ENCODE measurements at regions of chr5 and their contacts with region 1.

Region 1: DNA sequence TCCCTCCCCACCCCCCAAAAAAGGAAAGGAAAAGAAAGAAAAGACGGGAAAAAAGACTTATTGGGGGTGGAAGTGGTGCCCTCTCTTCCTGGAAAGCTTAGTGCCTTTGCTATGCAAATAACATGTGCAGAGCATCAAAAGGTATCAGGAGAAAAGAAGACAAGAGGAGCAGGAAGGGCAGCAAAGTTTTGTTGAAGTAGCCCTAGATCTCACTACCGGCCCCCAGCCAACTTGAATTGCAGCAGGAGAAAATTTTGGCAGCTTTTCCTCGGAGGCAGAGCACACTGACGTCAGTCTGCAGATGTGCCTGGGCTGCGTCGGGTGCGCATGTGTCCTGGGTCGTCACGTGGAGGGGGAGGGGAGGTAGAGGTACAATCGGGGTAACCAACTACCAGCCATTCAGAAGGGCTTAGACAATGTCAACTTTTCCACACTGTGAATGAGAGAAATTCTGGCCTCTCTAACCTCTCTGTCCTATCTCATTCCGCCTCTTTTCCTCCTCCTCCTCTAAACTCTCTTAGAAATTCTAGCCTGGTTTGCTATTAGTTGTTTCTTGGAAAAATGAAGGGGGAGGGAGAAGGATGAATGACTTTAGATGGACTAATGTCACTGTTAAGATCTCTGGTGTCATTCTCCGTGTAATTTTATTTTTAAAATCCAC is at the start of gene ADAMTS6:
- DNase-seq: peak; percentile 93 to 94
- ATAC-seq: peak; percentile 93
- H3K4me3 ChIP-seq: peak within 1 kb of the TSS; percentile 98
- H3K27ac ChIP-seq: peak within 1 kb of the TSS; percentile 82 to 87
- H3K4me1 ChIP-seq: no peaks in the 10 kb centered on the region
- H3K27me3 ChIP-seq: no peaks in the 10 kb centered on the region
- total RNA-seq, gene ADAMTS6: 7.1 to 11.5 TPM

Region 2: DNA sequence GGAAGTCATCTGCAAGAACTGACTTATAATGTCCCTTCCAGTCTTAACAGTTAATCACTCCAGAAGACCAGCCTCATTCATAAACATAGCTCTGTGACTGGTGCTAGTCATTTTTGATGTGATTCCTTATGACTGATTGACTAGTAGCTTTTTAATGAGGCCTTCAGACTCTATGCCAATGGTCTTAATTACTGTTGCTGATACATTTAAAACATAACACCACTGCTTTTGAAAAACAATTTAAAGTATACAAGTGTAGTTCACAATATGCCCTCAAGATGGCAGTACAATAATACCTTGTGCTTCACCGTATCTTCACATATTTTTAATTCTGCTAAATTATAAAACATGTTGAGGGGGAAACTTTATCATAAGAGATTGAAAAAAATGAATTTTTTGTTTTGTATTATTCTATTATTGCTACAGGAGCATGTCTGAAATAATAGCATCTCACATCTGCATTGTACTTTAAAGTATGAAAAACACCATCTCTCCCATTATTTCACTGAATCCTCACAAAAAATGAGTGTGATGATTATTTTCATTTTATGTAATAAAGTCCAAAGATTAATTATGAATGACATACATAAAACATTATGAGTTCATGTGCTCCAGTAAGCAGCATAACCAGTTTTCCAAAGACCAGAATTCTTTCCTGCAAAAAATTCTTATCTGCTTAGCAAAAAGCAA is 846.6 kb before region 1 on chr5:
- intact Hi-C with region 1: loop called in 1 of 2 experiments (anchors 10 kb)
- DNase-seq: no peak
- ATAC-seq: peak; percentile 68
- H3K4me3 ChIP-seq: no peak overlapping the region
- H3K27ac ChIP-seq: no peak overlapping the region
- H3K4me1 ChIP-seq: no peaks in the 10 kb centered on the region
- H3K27me3 ChIP-seq: peaks cover 0 to 2% of the 10 kb centered on the region in 2 donors

Region 3: DNA sequence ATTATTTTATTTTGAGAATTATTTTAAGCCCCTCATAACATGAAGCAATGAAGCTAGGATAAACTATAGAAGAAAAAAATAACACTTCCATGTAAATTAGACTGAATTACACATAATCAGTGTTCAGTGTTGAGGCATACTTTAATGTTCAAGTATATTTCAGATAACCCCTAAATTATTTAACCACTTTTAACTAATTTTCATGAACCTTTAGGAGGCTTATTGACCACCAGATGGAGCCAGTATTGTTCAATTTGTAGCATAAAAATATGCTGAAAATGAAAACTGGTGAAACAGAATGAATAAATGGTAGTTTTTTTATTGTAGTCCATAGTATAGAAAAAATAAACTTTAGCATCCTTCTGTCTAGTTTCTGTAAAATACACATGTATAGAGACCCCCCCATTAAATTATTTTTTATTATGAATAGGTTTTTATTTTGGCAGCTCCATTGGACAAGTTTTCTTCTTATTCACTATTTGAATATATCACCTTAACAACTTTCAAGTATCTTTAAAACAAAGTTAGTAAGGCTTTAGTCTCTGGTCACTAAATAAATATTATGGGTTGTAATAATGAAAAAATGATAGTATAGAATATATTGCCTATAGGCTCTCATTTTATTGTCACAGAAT is 522.9 kb before region 1 on chr5:
- intact Hi-C with region 1: loop called (anchors 2 to 5 kb)
- DNase-seq: no peak
- ATAC-seq: no peak
- H3K4me3 ChIP-seq: no peak overlapping the region
- H3K27ac ChIP-seq: no peak overlapping the region
- H3K4me1 ChIP-seq: peaks cover 0 to 2% of the 10 kb centered on the region in 2 donors
- H3K27me3 ChIP-seq: no peaks in the 10 kb centered on the region

Region 4: DNA sequence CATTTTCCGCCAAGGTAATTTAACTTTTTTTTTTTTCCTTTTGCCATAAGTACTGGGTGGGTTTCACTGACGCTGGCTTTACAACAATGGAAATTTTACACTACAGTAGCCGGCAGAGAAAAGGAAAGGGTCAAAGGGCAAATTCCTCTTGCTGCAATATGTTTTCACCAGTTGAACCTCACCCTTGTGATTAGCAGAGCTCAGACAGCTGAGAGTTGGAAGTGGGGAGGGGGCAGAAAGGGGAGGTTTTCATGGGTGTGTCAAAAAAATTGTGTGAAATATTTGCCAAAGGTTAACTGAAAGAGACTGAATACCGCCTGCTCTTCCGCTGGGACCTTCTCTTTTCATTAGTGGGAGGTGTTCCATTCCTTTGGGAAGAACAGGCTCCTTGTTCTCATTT is 297.0 kb before region 1 on chr5:
- intact Hi-C with region 1: loop called in 1 of 2 experiments (anchors 5 kb)
- DNase-seq: no peak
- ATAC-seq: no peak
- H3K4me3 ChIP-seq: no peak overlapping the region
- H3K27ac ChIP-seq: no peak overlapping the region
- H3K4me1 ChIP-seq: no peaks in the 10 kb centered on the region
- H3K27me3 ChIP-seq: no peaks in the 10 kb centered on the region

Region 5: DNA sequence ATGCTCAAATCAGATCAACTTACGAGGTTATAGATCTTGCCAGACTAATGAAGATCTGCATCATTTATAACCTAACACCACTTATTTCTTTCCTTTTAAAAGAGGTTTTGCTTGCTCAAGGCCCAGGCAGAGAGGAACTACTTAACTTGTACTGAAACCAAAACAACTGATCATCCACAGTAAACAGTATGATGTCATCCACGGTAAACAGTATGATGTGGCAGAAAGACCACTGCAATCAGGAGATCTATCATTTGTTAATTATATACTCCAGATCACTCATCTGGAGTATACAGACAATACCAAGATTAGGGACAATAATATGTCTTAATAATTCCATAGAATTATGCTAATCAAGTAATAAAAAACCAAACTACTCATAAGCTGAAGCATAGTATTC is 116.9 kb before region 1 on chr5:
- intact Hi-C with region 1: loop called (anchors 2 to 10 kb)
- DNase-seq: no peak
- ATAC-seq: no peak
- H3K4me3 ChIP-seq: no peak overlapping the region
- H3K27ac ChIP-seq: no peak overlapping the region
- H3K4me1 ChIP-seq: peaks cover 0 to 3% of the 10 kb centered on the region in 2 donors
- H3K27me3 ChIP-seq: no peaks in the 10 kb centered on the region

Region 6: DNA sequence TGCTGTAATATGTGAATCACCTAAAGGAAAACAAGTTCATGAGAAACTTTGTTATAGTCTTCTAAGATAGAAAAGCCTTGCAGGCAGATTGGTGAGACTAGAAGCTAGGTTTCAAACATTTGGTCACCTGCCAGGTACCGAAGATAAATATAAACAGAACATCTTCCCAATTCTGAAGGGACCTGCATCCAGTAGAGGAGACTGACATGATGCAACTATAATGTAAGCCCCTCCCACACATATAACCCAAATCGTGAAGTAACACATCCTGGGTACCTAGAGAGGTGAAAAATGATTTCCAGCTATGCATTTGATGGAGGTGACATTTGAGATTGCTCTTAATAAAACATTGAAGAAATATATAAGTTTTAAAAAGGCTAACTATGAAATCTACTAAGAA is 172.9 kb after region 1 on chr5:
- intact Hi-C with region 1: no loop called
- DNase-seq: no peak
- ATAC-seq: no peak
- H3K4me3 ChIP-seq: no peak overlapping the region
- H3K27ac ChIP-seq: no peak overlapping the region
- H3K4me1 ChIP-seq: no peaks in the 10 kb centered on the region
- H3K27me3 ChIP-seq: no peaks in the 10 kb centered on the region

Region 7: DNA sequence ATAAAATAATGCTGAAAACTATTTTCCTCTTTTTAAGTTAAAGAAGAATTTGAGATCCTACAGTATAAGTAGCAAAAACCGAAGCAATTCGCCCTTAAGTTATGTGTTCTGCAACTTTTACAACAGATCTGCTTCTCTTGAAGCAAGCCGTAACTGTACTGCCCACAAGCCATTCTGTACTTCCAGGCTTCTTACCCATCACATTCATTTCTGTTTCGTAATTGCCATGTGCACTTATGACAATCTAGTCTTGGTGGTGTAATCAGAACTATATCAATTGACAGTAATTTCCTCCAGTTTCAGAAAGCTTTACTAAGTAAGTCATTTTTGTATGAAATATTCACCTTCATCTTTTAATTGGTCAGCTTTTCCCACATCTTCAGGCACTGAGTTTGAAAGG is 226.4 kb after region 1 on chr5:
- intact Hi-C with region 1: no loop called
- DNase-seq: no peak
- ATAC-seq: no peak
- H3K4me3 ChIP-seq: no peak overlapping the region
- H3K27ac ChIP-seq: no peak overlapping the region
- H3K4me1 ChIP-seq: no peaks in the 10 kb centered on the region
- H3K27me3 ChIP-seq: no peaks in the 10 kb centered on the region

Measured in aorta (tissue), 5 donors.